WTC11 (cell line): ENCODE measurements at regions of chr5 and their contacts with region 1.

Region 1: GRCh38 chr5:76805850-76806505 is 12.9 kb upstream of the F2RL1 start:
- DNase-seq: no peak
- ATAC-seq: no peak
- H3K4me3 Mint-ChIP-seq: peak overlapping the region; percentile 55
- H3K27ac Mint-ChIP-seq: peak overlapping the region; percentile 98
- H3K4me1 Mint-ChIP-seq: peaks cover 64% of the 10 kb centered on the region
- H3K27me3 Mint-ChIP-seq: peaks cover 4% of the 10 kb centered on the region; the same call in 1 of the 2 replicates
- CTCF ChIP-seq: no peak

Region 2: DNA sequence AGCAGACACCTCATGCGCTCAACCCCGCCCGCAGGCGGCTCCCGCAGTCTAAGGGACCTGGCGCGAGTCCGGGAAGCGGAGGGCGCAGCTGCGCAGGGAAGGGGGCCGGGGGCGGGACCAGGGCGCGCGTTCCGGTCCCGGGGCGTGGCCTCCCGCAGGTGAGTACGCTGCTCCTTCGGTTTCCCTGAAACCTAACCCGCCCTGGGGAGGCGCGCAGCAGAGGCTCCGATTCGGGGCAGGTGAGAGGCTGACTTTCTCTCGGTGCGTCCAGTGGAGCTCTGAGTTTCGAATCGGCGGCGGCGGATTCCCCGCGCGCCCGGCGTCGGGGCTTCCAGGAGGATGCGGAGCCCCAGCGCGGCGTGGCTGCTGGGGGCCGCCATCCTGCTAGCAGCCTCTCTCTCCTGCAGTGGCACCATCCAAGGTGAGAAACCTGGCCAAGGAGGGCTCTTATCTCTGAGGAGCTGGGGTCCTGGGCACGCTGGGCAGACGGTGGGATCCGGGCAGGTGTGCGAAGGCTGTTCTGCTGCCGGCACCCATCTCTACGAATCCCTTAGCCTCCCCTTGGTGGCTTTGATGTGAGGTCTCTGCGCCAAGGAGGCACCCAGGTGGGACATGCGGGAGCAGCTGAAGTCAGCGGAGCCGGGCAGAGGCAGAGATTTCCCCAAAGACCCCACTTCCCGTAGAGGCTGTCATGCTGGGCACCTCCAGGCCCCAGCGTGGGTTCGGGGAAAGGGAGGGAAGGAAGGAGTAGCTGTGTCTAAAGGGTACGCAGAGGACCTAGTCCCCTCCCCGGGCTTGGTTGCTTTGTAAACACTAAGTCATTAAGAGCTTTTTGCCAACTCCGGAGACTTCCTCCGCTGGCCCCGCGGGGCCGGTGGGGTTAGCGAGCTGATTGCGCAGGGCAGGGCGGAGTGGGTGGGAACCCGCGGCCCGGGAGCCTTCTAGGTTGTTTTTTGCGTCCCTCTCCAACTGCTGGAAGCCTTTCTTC is 13.2 kb after region 1 on chr5 and contains the start of gene F2RL1:
- CTCF ChIA-PET with region 1: interaction called, 27 read pairs
- POLR2A ChIA-PET with region 1: interaction called, 73 read pairs
- DNase-seq: peak; percentile 95
- ATAC-seq: peak; percentile 88
- H3K4me3 Mint-ChIP-seq: peak within 1 kb of the TSS; percentile 91
- H3K27ac Mint-ChIP-seq: peak within 1 kb of the TSS; percentile 99
- H3K4me1 Mint-ChIP-seq: peaks cover 24% of the 10 kb centered on the region
- H3K27me3 Mint-ChIP-seq: peaks cover 16% of the 10 kb centered on the region
- CTCF ChIP-seq: no peak
- total RNA-seq, gene F2RL1: 37.3 to 38.9 TPM (median 37.5 TPM) in 3 replicates